BJ (cell line): ENCODE measurements at regions of chr9 and their contacts with region 1.

Region 1: DNA sequence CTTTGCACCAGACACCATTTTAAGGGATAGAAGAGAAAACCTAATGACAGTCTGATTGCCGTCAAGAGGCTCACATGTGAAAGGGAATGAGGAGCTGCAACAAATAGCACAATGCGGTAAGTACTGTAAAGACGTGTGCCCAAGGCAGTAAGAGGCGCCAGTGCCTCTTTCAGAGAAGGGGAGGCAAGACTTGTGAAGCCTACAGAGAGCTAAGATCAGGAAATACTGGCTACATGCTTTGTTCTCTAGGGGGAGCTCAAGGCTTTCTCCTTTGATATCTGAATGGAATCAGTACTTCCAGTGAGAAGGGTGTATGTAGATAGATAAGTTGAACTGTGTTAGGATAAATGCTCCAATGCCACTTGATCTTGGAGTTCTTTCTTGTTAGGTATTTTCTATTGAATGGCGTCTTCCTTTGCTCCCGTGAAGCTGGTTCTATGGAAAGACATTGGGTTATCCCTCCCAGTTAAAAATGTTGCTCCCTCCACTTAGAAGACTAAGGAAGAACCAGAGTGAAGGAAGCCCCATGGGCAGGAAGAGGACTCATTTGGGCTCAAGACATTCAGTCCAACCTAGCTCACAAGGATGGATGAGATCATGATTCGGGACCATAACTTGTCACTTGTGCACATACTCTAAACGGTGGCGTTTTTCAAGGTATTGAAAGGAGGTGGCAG is 23.5 kb upstream of the ALDOB start:
- DNase-seq: peak; percentile 31
- H3K4me3 ChIP-seq: no peak overlapping the region
- H3K27me3 ChIP-seq: no peaks in the 10 kb centered on the region
- CTCF ChIP-seq: peak; percentile 89

Region 2: GRCh38 chr9:101472891-101473290 is 13.8 kb after region 1 on chr9:
- CTCF ChIA-PET with region 1: interaction called, 13 read pairs
- POLR2A ChIA-PET with region 1: no interaction called
- DNase-seq: no peak
- H3K4me3 ChIP-seq: no peak overlapping the region
- H3K27me3 ChIP-seq: no peaks in the 10 kb centered on the region
- CTCF ChIP-seq: no peak

Region 3: DNA sequence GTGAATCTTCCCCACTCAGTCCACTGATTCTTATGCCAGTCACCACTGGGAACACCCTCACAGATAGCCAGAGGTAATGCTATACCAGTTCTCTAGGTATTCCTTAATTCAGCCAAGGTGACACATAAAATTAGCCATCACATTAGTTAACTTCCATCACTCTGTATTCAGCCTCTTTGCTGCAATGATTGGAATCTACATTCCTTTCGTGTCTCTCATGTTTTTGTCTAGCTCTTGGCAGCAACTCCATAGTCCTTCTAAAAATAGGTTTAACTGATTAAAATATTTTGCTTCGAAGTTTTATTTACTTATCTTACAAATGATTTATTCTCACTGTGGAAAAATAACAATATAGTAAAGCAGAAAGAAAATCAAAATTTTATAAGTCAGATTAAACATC is 55.0 kb after region 1 on chr9:
- CTCF ChIA-PET with region 1: interaction called, 490 read pairs
- POLR2A ChIA-PET with region 1: no interaction called
- DNase-seq: peak; percentile 62
- H3K4me3 ChIP-seq: no peak overlapping the region
- H3K27me3 ChIP-seq: no peaks in the 10 kb centered on the region
- CTCF ChIP-seq: no peak

Region 4: GRCh38 chr9:101543098-101543735 is 84.1 kb after region 1 on chr9:
- CTCF ChIA-PET with region 1: interaction called, 490 read pairs
- POLR2A ChIA-PET with region 1: no interaction called
- DNase-seq: no peak
- H3K4me3 ChIP-seq: no peak overlapping the region
- H3K27me3 ChIP-seq: no peaks in the 10 kb centered on the region
- CTCF ChIP-seq: no peak

Region 5: DNA sequence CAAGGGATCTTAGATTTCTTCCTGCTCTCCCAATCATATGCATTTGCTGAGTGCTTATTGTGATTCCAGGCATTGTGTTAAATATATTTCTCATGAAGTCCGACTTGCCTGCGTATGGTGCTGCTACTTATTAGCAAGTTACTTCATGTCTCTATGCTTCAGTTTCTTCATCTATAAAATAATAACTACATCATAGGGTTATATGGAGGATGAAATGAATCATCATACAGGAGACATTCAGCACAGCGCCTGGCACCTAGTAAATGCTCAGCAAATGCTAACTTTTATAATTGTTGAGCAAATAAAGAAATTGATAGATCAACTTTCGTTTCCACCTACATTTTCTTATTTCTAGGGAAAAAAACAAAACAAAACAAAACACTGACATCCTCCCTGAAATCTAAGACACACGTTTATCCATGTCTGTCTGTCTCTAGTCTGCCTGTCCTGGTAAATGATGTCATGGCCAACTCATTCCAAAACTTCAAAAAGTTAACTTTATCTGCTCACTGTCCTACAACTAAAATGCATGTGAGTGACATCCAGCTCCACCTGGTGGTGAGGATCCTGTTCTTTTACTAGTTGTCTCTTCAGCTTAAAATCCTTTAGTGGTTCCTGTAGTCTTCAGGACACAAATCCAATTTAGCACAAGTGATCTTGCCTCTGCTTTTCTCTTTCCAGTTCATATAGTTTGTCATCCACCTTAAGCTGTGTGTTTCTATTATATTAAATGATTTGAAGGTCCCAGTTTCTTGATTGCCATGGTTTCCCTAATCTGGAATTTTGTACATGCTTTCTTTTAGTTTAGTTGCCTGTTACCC is 108.0 kb after region 1 on chr9:
- CTCF ChIA-PET with region 1: interaction called, 10 read pairs
- POLR2A ChIA-PET with region 1: no interaction called
- DNase-seq: no peak
- H3K4me3 ChIP-seq: no peak overlapping the region
- H3K27me3 ChIP-seq: no peaks in the 10 kb centered on the region
- CTCF ChIP-seq: peak; percentile 59